Natural killer cell (primary cell): ENCODE measurements at regions of chr14 and their contacts with region 1.

Region 1: DNA sequence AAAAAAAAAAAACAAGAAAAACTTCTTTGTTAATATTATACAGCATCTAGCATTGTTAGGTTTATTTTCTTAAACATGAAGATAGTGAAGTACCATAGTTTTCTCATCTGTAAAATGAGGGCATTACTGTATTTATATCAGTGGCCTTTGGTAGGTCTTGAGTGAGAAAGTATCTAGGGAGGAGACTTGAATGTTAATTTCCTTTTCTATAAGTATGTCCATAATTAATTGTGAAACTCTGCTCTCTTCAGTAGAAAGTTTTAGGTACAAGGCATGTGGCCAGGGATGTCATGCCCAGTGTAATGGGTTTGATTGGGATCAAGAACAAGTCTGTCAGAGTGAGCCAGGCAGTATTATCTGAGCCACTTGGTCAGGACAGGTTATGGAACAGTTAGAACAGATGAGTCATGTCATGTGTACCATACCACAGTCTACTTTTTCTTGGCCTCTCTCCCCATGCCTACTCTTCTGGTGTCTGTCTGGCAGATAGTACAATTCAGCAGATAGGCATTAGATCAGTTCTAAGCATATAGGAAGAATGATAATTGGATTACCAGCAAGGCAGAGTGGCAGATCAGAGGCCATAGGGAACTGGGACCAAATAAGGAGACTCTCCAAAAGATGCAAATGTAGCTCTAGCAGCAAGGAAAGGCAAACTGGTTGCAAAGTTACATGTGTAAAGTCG is 30.4 kb downstream of the FBXO34 start:
- DNase-seq: no peak
- ATAC-seq: peak; percentile 38 to 69 (median 52)
- H3K4me3 ChIP-seq: no peak overlapping the region
- H3K4me3 Mint-ChIP-seq: peak overlapping the region; percentile 7
- H3K27ac ChIP-seq: no peak overlapping the region
- H3K27ac Mint-ChIP-seq: peak overlapping the region; percentile 74 to 77
- H3K4me1 ChIP-seq: peaks cover 3% of the 10 kb centered on the region
- H3K4me1 Mint-ChIP-seq: peaks cover 68 to 71% of the 10 kb centered on the region in 2 donors
- H3K27me3 ChIP-seq: no peaks in the 10 kb centered on the region
- H3K27me3 Mint-ChIP-seq: no peaks in the 10 kb centered on the region
- CTCF ChIP-seq: no peak

Region 2: DNA sequence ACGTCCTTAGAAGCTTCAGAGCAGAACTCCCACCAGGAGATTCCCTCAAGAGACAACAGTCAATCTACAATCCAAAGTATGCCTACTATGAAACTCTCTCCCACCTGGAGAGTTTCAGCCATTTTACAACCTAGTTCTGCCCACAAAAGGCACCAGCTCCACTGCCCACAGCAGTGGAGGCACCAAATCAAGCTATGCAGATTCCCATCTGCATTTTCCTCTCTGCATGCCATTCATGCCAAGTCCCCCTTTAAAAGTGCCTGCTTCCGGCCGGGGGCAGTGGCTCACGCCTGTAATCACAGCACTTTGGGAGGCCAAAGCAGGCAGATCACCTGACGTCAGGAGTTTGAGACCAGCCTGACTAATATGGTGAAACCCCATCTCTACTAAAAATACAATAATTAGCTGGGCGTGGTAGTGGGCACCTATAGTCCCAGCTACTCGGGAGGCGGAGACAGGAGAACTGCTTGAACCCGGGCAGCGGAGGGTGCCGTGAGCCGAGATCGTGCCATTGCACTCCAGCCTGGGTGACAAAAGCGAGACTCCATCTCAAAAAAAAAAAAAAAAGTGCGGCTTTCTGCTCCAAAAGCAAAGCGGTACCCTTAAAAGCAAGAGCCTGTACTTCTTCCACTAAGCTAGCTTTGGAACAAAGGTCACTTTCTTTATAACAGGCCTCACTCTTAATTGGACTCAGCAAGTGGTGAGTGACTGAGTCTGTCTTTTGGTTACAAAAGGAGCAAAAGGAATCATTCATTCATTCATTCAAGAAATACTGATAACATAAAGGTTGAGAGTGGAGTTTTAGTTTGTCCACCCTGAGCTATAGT is 100.1 kb before region 1 on chr14:
- intact Hi-C with region 1: no loop called
- DNase-seq: no peak
- ATAC-seq: no peak
- H3K4me3 ChIP-seq: no peak overlapping the region
- H3K4me3 Mint-ChIP-seq: no peak overlapping the region
- H3K27ac ChIP-seq: no peak overlapping the region
- H3K27ac Mint-ChIP-seq: no peak overlapping the region
- H3K4me1 ChIP-seq: no peaks in the 10 kb centered on the region
- H3K4me1 Mint-ChIP-seq: no peaks in the 10 kb centered on the region
- H3K27me3 ChIP-seq: no peaks in the 10 kb centered on the region
- H3K27me3 Mint-ChIP-seq: peaks cover 0 to 8% of the 10 kb centered on the region in 2 donors
- CTCF ChIP-seq: no peak

Region 3: GRCh38 chr14:55270832-55271565 is 30.6 kb before region 1 on chr14 and contains the start of gene FBXO34:
- intact Hi-C with region 1: loop called (anchors 2 kb)
- DNase-seq: peak; percentile 99 to 100
- ATAC-seq: peak; percentile 89 to 98 (median 90)
- H3K4me3 ChIP-seq: peak within 1 kb of the TSS; percentile 99
- H3K4me3 Mint-ChIP-seq: peak within 1 kb of the TSS; percentile 92
- H3K27ac ChIP-seq: peak within 1 kb of the TSS; percentile 98
- H3K27ac Mint-ChIP-seq: peak within 1 kb of the TSS; percentile 90 to 94
- H3K4me1 ChIP-seq: peaks cover 9% of the 10 kb centered on the region
- H3K4me1 Mint-ChIP-seq: peaks cover 33 to 38% of the 10 kb centered on the region in 2 donors
- H3K27me3 ChIP-seq: no peaks in the 10 kb centered on the region
- H3K27me3 Mint-ChIP-seq: no peaks in the 10 kb centered on the region
- CTCF ChIP-seq: peak; percentile 97
- total RNA-seq, gene FBXO34: 34.7 to 39.3 (median 36.6) TPM

Region 4: GRCh38 chr14:55339770-55340169 is 38.2 kb after region 1 on chr14:
- intact Hi-C with region 1: loop called (anchors 5 kb)
- DNase-seq: peak in 1 of 2 donors; percentile 29
- ATAC-seq: no peak
- H3K4me3 ChIP-seq: no peak overlapping the region
- H3K4me3 Mint-ChIP-seq: no peak overlapping the region
- H3K27ac ChIP-seq: peak overlapping the region; percentile 24
- H3K27ac Mint-ChIP-seq: peak overlapping the region; percentile 70 to 91
- H3K4me1 ChIP-seq: peaks cover 39% of the 10 kb centered on the region
- H3K4me1 Mint-ChIP-seq: peaks cover 73 to 82% of the 10 kb centered on the region in 2 donors
- H3K27me3 ChIP-seq: no peaks in the 10 kb centered on the region
- H3K27me3 Mint-ChIP-seq: no peaks in the 10 kb centered on the region
- CTCF ChIP-seq: no peak